PC-9 (cell line): ENCODE measurements at regions of chr4 and their contacts with region 1.

Region 1: GRCh38 chr4:23084559-23085248 is 392.0 kb downstream of the GBA3 start:
- DNase-seq: no peak
- H3K4me3 ChIP-seq: no peak overlapping the region
- H3K27ac ChIP-seq: no peak overlapping the region
- H3K4me1 ChIP-seq: no peaks in the 10 kb centered on the region; the same call in 1 of the 2 replicates
- H3K27me3 ChIP-seq: no peaks in the 10 kb centered on the region
- CTCF ChIP-seq: no peak

Region 2: GRCh38 chr4:23097251-23097650 is 12.5 kb after region 1 on chr4:
- CTCF ChIA-PET with region 1: no interaction called
- POLR2A ChIA-PET with region 1: interaction called, 15 read pairs
- intact Hi-C with region 1: no loop called
- DNase-seq: no peak
- H3K4me3 ChIP-seq: no peak overlapping the region
- H3K27ac ChIP-seq: no peak overlapping the region
- H3K4me1 ChIP-seq: no peaks in the 10 kb centered on the region
- H3K27me3 ChIP-seq: no peaks in the 10 kb centered on the region
- CTCF ChIP-seq: no peak

Region 3: DNA sequence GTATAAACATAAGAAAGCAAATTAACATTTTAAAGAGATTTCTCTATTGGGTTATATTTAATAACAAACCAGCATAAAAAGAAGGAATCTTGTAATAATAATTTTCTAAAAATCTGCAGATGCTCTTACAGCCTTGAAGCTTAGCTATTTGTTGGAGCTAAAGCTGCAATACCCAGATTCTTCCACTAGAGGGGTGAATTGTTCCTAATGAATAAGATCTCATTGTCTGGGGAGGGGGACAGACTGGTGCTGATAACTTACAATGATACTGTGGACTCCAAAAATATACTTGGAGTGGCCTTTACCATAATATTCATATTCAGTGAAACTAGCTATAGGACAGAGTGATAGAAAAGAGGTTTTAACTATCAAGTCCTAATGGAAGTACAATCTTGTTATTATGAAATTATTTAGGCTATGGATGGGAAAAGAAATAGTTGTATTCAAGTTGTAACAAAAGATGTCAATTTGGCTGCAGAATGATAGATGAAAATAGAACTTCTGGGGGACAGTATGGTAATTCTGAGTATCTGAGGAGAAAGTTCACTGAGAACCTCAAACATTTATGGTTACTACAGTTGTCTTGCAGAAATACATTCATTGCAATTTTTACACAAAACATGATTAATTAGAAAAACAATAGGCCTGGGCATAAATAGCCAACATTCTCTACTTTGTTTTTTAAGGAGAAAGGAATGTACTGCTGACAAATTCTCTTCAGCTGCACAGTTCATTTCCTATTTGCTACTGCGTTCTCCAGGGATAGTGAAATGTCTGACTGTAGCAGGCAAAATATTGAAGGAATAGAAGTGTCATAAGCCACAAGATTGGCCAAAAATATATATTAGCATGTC is 51.3 kb after region 1 on chr4:
- CTCF ChIA-PET with region 1: no interaction called
- POLR2A ChIA-PET with region 1: no interaction called
- intact Hi-C with region 1: no loop called
- DNase-seq: no peak
- H3K4me3 ChIP-seq: no peak overlapping the region
- H3K27ac ChIP-seq: no peak overlapping the region
- H3K4me1 ChIP-seq: no peaks in the 10 kb centered on the region
- H3K27me3 ChIP-seq: no peaks in the 10 kb centered on the region
- CTCF ChIP-seq: peak; percentile 89

Region 4: GRCh38 chr4:24260133-24260715 is 1175.5 kb after region 1 on chr4:
- CTCF ChIA-PET with region 1: no interaction called
- POLR2A ChIA-PET with region 1: no interaction called
- intact Hi-C with region 1: no loop called
- DNase-seq: no peak
- H3K4me3 ChIP-seq: no peak overlapping the region
- H3K27ac ChIP-seq: no peak overlapping the region
- H3K4me1 ChIP-seq: no peaks in the 10 kb centered on the region
- H3K27me3 ChIP-seq: peaks cover 9% of the 10 kb centered on the region; the same call in 1 of the 2 replicates
- CTCF ChIP-seq: no peak